Right cardiac atrium (tissue), 5 donors: ENCODE measurements at regions of chr1 and their contacts with region 1.

Region 1: DNA sequence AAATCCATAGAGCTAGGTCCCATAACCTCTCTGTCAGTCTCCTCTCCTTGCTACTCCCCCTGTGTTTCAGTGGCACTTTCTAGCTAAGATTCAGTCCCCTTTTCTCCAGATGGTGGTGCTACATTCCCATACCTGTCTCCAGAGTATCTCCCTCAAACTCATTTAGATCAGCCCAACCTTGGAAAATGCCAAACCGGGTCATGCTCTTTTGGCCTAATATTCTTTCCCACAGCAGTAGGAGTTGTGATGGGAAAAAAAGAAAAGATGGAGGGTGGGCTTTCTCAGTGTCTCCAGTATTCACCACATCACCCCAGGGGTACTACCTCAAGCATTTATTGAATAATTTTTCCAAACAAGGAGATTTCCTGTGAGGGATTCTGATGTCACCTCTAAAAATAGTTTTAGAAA is 3.2 kb upstream of the RXFP4 start:
- DNase-seq: no peak
- ATAC-seq: peak in 1 of 2 donors; percentile 9
- H3K4me3 ChIP-seq: no peak overlapping the region
- H3K27ac ChIP-seq: peak overlapping the region; percentile 8
- H3K4me1 ChIP-seq: peaks cover 18% of the 10 kb centered on the region
- H3K27me3 ChIP-seq: no peaks in the 10 kb centered on the region

Region 2: GRCh38 chr1:155884031-155884960 is 53.9 kb before region 1 on chr1:
- intact Hi-C with region 1: no loop called
- DNase-seq: no peak
- ATAC-seq: peak; percentile 31 to 45
- H3K4me3 ChIP-seq: no peak overlapping the region
- H3K27ac ChIP-seq: no peak overlapping the region
- H3K4me1 ChIP-seq: no peaks in the 10 kb centered on the region
- H3K27me3 ChIP-seq: no peaks in the 10 kb centered on the region

Region 3: DNA sequence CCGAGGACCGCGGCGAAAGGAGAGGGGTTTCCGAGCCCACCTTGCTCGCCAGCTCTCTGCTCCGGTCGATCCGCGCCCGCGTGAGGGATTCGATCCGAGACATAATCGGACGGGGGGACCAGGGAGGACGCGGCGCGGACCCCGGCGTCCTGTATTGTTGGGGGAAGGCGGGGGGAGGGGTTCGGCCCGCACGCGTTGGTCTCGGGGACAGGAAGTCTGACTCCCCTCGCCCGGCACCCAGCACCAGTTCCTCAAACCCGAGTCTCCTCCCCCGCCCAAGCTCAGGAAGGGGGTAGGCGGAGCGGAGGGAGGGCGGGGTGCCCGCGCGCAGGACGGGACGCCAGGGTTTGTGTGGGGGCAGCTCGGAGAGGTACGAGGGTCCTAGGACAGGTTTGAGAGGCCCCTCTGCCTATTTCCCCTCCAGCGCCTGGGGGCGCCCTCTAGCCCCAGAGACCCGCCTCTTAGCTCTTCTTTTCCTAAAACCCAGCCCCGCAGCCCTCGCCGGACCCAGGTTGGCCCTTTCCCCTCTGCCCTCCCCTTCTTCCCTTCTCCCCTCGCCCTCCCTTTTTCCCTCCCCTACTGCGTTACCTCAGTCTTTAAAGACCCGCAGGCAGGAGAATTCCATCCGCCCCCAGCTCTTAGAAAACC is 40.2 kb after region 1 on chr1 and contains the start of gene ARHGEF2:
- intact Hi-C with region 1: loop called in 1 of 4 experiments (anchors 5 kb)
- DNase-seq: peak; percentile 89 to 94 (median 94)
- ATAC-seq: peak; percentile 78 to 82
- H3K4me3 ChIP-seq: peak within 1 kb of the TSS; percentile 87
- H3K27ac ChIP-seq: peak within 1 kb of the TSS; percentile 98
- H3K4me1 ChIP-seq: peaks cover 44% of the 10 kb centered on the region
- H3K27me3 ChIP-seq: no peaks in the 10 kb centered on the region
- total RNA-seq, gene ARHGEF2: 56.6 to 75.7 (median 66.7) TPM

Region 4: DNA sequence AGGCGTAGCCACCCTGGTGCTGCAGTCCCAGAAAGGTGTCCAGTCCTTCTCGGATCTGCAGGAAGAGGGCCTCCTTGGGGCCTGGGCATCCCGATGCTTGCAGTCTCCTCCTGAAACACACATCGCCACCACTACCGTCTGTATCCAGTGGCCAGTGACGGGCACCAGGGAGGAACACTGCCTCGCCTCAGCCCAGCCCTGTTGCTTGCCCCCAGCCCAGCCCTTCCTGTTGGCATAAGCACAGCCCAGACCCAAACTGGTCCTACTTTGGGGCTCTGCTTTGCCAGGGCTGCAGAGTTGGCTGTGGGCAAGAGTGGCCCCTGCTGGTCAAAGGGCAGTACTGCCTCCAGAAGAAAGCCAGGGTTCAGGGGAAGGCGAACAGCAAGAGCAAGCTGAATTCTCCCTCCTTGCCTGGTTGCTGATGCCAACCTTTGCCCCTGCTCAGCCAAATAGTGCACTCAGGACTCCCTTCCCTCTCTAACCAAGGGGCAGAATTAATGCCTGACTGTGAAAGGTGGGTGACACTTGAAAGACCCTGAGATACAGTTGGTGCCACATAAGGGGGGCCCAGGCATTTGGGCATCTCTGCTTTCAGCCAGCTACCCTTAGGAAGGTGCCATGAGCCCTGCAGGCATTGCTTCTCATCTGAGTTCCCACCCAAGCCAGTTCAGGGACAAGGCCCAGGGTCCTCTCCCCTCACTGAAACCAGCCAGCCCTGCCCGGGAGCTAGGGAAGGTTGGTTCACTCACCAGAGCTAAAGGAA is 51.2 kb after region 1 on chr1:
- intact Hi-C with region 1: loop called (anchors 2 to 5 kb)
- DNase-seq: peak; percentile 74 to 91 (median 87)
- ATAC-seq: peak; percentile 95
- H3K4me3 ChIP-seq: peak overlapping the region; percentile 33
- H3K27ac ChIP-seq: peak overlapping the region; percentile 30
- H3K4me1 ChIP-seq: no peaks in the 10 kb centered on the region
- H3K27me3 ChIP-seq: no peaks in the 10 kb centered on the region

Region 5: GRCh38 chr1:156001021-156001681 is 62.9 kb after region 1 on chr1:
- intact Hi-C with region 1: no loop called
- DNase-seq: no peak
- ATAC-seq: peak in 1 of 2 donors; percentile 40
- H3K4me3 ChIP-seq: no peak overlapping the region
- H3K27ac ChIP-seq: no peak overlapping the region
- H3K4me1 ChIP-seq: no peaks in the 10 kb centered on the region
- H3K27me3 ChIP-seq: no peaks in the 10 kb centered on the region

Region 6: GRCh38 chr1:156033011-156033410 is 94.8 kb after region 1 on chr1:
- intact Hi-C with region 1: no loop called
- DNase-seq: no peak
- ATAC-seq: peak in 1 of 2 donors; percentile 43
- H3K4me3 ChIP-seq: no peak overlapping the region
- H3K27ac ChIP-seq: no peak overlapping the region
- H3K4me1 ChIP-seq: no peaks in the 10 kb centered on the region
- H3K27me3 ChIP-seq: no peaks in the 10 kb centered on the region